PC-9 (cell line): ENCODE measurements at regions of chr9 and their contacts with region 1.

Region 1: DNA sequence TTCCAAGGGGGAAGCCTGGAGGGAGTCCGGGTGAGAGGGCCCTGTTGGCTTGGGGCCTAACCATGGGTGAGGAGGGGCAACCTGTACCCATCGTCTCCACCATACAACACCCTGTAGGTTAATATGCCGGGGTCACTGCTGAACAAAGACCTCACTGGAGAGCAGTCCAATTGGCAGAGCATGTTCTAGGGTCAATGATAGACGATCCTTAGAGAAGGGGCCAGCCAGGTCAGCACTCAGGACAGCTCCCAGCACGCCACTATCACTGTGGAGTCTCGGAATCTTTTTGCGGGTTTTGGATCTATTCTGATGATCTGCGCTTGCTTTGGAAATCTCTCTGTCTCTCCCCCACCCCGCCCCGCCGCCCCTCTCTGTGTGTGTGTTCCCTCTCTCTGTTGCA is 218.4 kb upstream of the MVB12B start:
- DNase-seq: no peak
- H3K4me3 ChIP-seq: no peak overlapping the region
- H3K27ac ChIP-seq: no peak overlapping the region
- H3K4me1 ChIP-seq: no peaks in the 10 kb centered on the region
- H3K27me3 ChIP-seq: peaks cover 89% of the 10 kb centered on the region
- CTCF ChIP-seq: no peak

Region 2: DNA sequence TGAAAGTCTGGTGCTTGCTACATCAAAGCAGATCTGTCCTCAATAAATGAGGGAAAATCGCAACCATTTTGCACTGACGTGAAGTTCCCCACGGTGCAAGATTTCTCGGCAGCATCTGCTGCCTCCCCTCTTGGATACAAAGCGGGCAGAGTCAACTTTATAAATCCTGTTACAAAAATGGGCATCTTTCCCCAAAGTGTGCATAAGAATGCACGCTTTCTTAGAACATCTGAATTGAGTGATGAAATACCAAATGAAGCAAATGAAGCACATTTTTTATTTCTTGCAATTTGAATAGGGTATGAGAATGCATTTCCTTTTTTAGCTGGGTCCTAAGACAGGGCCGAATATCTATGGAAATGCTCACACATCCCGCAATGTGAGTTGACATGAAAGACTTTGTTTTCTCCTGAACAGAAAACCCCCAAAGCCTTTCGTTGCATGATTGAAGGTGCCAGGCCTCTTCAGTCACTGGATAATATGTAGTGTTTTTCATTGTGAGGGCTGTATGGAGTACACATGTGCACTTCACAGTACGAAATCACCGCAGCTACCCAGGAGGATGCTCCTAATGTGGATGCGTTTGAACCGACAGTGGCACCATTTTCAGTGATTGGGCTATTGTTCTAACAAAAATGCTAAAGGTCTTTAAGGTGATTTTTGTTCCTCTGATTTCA is 381.6 kb before region 1 on chr9:
- CTCF ChIA-PET with region 1: interaction called, 10 read pairs
- POLR2A ChIA-PET with region 1: no interaction called
- intact Hi-C with region 1: no loop called
- DNase-seq: no peak
- H3K4me3 ChIP-seq: no peak overlapping the region
- H3K27ac ChIP-seq: no peak overlapping the region
- H3K4me1 ChIP-seq: no peaks in the 10 kb centered on the region
- H3K27me3 ChIP-seq: peaks cover 3% of the 10 kb centered on the region; the same call in 1 of the 2 replicates
- CTCF ChIP-seq: no peak